Dendritic cell treated with granulocyte-macrophage colony-stimulating factor and Interleukin-4, amounts not matched to agents 40 ng/mL and 50 ng/mL, for 4 days (primary cell): ENCODE measurements at regions of chr15 and their contacts with region 1.

Region 1: DNA sequence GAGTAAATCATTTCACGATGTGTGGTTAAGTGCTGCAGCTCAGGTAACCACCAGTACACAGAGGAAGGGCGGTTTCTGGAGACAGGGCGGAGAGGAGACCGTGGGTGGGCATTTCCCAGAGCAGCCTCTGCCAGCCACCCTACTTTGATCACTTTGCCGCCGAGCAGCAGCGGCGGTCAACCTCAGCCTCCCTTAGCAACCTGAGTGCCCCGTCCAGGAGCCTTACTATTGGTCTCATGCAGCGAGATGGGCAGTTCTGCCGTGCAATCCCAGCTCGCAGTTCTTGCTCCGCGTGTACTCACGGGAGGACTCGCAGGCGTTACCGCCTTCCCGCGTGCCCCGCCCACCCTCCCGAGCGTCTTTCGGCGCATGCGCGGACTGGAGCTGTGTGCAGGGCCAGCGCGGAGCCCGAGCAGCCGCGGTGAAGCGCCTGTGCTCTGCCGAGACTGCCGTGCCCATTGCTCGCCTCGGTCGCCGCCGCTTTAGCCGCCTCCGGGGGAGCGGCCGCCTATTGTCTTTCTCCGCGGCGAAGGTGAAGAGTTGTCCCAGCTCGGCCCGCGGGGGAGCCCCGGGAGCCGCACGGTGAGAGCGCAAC is at the start of gene AKAP13:
- H3K4me3 Mint-ChIP-seq: peak within 1 kb of the TSS; percentile 93
- H3K27ac Mint-ChIP-seq: peak within 1 kb of the TSS; percentile 95
- H3K4me1 Mint-ChIP-seq: peaks cover 32% of the 10 kb centered on the region
- H3K27me3 Mint-ChIP-seq: no peaks in the 10 kb centered on the region

Region 2: GRCh38 chr15:84992157-84992944 is 388.0 kb before region 1 on chr15:
- intact Hi-C with region 1: no loop called
- H3K4me3 Mint-ChIP-seq: no peak overlapping the region
- H3K27ac Mint-ChIP-seq: peak overlapping the region; percentile 8
- H3K4me1 Mint-ChIP-seq: peaks cover 47% of the 10 kb centered on the region
- H3K27me3 Mint-ChIP-seq: no peaks in the 10 kb centered on the region

Region 3: DNA sequence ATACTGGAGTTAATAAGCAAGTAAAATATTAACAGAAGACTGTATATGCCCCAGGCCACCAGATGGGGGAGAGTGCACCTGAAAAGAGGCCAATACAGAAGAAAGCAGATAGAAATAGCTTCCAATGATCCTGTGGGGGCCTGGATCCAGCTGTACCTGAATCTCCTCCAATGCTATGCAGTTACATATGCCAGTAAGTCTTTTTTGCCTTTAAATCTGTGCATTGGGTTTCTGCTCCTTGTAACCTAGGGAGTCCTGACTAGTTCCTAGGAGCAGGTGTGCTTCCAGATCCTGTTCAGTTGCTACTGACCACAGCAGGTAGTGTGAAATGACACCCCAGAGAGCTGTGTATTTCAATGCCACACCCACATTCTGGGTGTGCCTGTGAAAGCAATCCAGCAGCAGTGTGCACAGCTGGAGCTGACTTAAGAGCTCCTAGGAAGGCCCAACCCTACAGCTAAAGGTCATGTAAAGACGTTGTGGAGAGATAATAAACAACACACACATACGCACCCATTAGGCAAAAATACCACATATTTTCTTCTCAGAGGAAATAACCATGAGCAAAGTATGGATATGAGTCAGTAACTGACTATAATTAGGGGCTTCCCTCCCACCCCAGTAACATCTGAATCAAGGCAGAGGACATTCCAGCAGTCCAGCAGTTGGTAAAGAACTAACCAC is 62.1 kb before region 1 on chr15:
- intact Hi-C with region 1: no loop called
- H3K4me3 Mint-ChIP-seq: no peak overlapping the region
- H3K27ac Mint-ChIP-seq: no peak overlapping the region
- H3K4me1 Mint-ChIP-seq: peaks cover 28% of the 10 kb centered on the region
- H3K27me3 Mint-ChIP-seq: no peaks in the 10 kb centered on the region

Region 4: GRCh38 chr15:85330901-85331588 is 49.3 kb before region 1 on chr15:
- intact Hi-C with region 1: loop called (anchors 5 kb)
- H3K4me3 Mint-ChIP-seq: peak overlapping the region; percentile 23
- H3K27ac Mint-ChIP-seq: peak overlapping the region; percentile 67
- H3K4me1 Mint-ChIP-seq: peaks cover 32% of the 10 kb centered on the region
- H3K27me3 Mint-ChIP-seq: no peaks in the 10 kb centered on the region

Region 5: GRCh38 chr15:85407804-85408746 is 27.8 kb after region 1 on chr15:
- intact Hi-C with region 1: loop called (anchors 1 kb)
- H3K4me3 Mint-ChIP-seq: peak overlapping the region; percentile 50
- H3K27ac Mint-ChIP-seq: peak overlapping the region; percentile 36
- H3K4me1 Mint-ChIP-seq: peaks cover 45% of the 10 kb centered on the region
- H3K27me3 Mint-ChIP-seq: no peaks in the 10 kb centered on the region